PC-9 (cell line): ENCODE measurements at regions of chr7 and their contacts with region 1.

Region 1: DNA sequence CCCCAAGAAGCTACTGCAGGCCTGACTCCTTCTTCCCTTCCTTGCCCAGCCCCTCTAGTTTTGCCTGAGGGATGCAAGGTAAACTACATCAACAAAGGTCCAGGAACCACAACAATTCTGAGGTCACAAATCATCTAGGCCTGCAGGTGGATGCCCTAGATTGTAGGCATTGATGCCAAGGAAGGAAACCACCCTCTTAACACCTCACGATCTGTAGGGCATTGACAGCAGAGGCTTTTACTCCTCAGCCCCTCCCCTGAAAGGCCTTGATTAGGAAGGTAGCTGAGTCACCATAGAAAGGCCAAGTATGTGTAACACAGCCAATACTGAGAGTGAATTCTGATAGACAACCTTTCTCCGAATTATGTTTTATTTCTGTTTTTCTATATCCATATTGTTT is 46.7 kb upstream of the FAM3C start:
- DNase-seq: peak; percentile 85 to 98
- H3K4me3 ChIP-seq: no peak overlapping the region
- H3K27ac ChIP-seq: peak overlapping the region; percentile 0; the same call in 1 of the 2 replicates
- H3K4me1 ChIP-seq: peaks cover 18% of the 10 kb centered on the region; the same call in 1 of the 2 replicates
- H3K27me3 ChIP-seq: no peaks in the 10 kb centered on the region
- CTCF ChIP-seq: no peak

Region 2: GRCh38 chr7:121366852-121367431 is 75.9 kb before region 1 on chr7:
- CTCF ChIA-PET with region 1: interaction called, 7 read pairs
- POLR2A ChIA-PET with region 1: no interaction called
- intact Hi-C with region 1: loop called (anchors 1 kb)
- DNase-seq: peak; percentile 15 to 48
- H3K4me3 ChIP-seq: no peak overlapping the region
- H3K27ac ChIP-seq: peak overlapping the region; percentile 38
- H3K4me1 ChIP-seq: peaks cover 16% of the 10 kb centered on the region; the same call in 1 of the 2 replicates
- H3K27me3 ChIP-seq: no peaks in the 10 kb centered on the region
- CTCF ChIP-seq: peak; percentile 94

Region 3: DNA sequence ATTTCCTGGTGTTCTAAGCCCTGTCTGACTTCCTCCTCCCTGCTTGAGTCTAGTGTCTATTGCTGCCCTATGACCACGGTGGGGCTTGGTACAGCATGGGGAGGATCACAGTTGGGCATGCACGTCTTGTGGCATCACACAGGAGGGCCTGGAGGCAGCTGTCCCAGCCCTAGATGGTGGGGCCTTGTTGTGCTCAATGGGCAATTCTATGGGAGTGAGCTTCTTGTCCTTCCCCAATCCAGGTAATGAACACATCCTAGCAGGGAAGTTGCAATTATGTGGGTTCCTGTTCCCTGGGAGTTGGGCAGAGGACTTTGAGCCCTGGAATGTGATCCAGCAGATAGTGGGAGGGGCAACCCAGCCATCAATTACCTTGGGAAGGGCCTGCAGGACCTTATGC is 35.9 kb before region 1 on chr7:
- CTCF ChIA-PET with region 1: no interaction called
- POLR2A ChIA-PET with region 1: no interaction called
- intact Hi-C with region 1: no loop called
- DNase-seq: no peak
- H3K4me3 ChIP-seq: no peak overlapping the region
- H3K27ac ChIP-seq: no peak overlapping the region
- H3K4me1 ChIP-seq: no peaks in the 10 kb centered on the region
- H3K27me3 ChIP-seq: no peaks in the 10 kb centered on the region
- CTCF ChIP-seq: no peak

Region 4: GRCh38 chr7:121420979-121421378 is 21.9 kb before region 1 on chr7:
- CTCF ChIA-PET with region 1: interaction called, 6 read pairs
- POLR2A ChIA-PET with region 1: no interaction called
- intact Hi-C with region 1: loop called (anchors 1 kb)
- DNase-seq: peak; percentile 46 to 94
- H3K4me3 ChIP-seq: peak overlapping the region; percentile 25; the same call in 1 of the 2 replicates
- H3K27ac ChIP-seq: peak overlapping the region; percentile 67
- H3K4me1 ChIP-seq: peaks cover 25% of the 10 kb centered on the region
- H3K27me3 ChIP-seq: no peaks in the 10 kb centered on the region
- CTCF ChIP-seq: no peak

Region 5: DNA sequence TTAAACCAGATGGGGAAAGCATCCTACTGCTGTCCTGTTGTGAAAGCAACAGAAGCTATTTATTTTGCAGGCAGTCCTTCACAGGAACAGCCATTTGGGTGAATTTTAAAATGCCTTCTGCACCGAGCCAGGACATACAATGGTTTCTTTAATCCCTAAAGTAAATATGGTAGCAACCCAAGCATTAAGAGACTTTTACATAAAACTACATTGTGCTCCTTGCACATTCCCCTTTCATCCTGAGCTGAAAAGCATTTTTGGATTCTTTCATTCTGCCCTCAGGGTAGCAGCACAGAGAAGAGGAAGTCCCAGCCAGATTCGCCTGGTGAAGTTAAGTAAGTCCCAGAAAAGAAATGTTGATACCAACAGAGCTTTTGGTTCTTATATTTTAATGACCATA is 37.2 kb after region 1 on chr7:
- CTCF ChIA-PET with region 1: no interaction called
- POLR2A ChIA-PET with region 1: no interaction called
- intact Hi-C with region 1: loop called (anchors 5 kb)
- DNase-seq: peak; percentile 23 to 62
- H3K4me3 ChIP-seq: no peak overlapping the region
- H3K27ac ChIP-seq: no peak overlapping the region
- H3K4me1 ChIP-seq: peaks cover 12% of the 10 kb centered on the region; the same call in 1 of the 2 replicates
- H3K27me3 ChIP-seq: no peaks in the 10 kb centered on the region
- CTCF ChIP-seq: no peak

Region 6: GRCh38 chr7:122248472-122248871 is 805.6 kb after region 1 on chr7:
- CTCF ChIA-PET with region 1: no interaction called
- POLR2A ChIA-PET with region 1: no interaction called
- intact Hi-C with region 1: no loop called
- DNase-seq: peak in 1 of 2 experiments; percentile 59
- H3K4me3 ChIP-seq: no peak overlapping the region
- H3K27ac ChIP-seq: no peak overlapping the region
- H3K4me1 ChIP-seq: no peaks in the 10 kb centered on the region
- H3K27me3 ChIP-seq: no peaks in the 10 kb centered on the region
- CTCF ChIP-seq: no peak

Region 7: DNA sequence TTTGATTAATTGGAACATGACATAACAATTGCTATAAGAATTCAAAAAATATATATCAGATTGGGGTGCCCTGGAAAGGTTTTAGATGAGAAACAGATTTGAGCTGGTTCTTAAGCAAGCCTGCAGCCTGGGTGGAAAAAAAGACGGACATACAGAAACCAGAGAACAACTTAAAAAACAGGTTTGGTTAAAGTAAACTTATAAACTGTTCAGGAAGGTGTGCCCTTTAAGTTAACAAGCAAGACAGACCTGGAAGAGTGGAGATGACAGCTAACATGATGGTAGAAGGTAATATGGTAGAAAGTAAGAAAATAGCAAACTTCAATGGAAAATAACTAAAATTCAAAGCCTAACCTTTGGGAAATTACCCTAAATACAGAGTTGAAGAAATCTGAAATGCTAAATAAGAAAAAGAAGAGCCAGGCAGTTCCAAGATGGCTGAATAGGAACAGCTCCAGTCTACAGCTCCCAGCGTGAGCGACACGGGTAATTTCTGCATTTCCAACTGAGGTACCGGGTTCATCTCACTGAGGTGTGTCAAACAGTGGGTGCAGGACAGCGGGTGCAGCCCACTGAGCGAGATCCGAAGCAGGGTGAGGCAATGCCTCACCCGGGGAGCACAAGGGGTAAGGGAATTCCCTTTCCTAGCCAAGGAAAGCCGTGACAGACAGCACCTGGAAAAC is 1391.2 kb after region 1 on chr7:
- CTCF ChIA-PET with region 1: no interaction called
- POLR2A ChIA-PET with region 1: interaction called, 30 read pairs
- intact Hi-C with region 1: no loop called
- DNase-seq: no peak
- H3K4me3 ChIP-seq: 0 out of 2 replicates have a peak overlapping the region, but pooled peaks have one; percentile 7
- H3K27ac ChIP-seq: no peak overlapping the region
- H3K4me1 ChIP-seq: no peaks in the 10 kb centered on the region
- H3K27me3 ChIP-seq: no peaks in the 10 kb centered on the region
- CTCF ChIP-seq: no peak